ENCODE measurements at regions of chr2 and their contacts with region 1.

Region 1: GRCh38 chr2:196220671-196221070 is 49.3 kb upstream of the STK17B start:
- DNase-seq: peak in 16 of 35 experiments; percentile 2 to 69 (median 26)
- ATAC-seq: peak; percentile 74 to 98 (median 86)
- H3K4me3 ChIP-seq: no peak overlapping the region
- H3K4me3 Mint-ChIP-seq: peak overlapping the region in 1 of 3 donors; percentile 30
- H3K27ac ChIP-seq: no peak overlapping the region
- H3K27ac Mint-ChIP-seq: peak overlapping the region; percentile 65 to 86
- H3K4me1 ChIP-seq: peaks cover 8 to 13% of the 10 kb centered on the region in 2 experiments
- H3K4me1 Mint-ChIP-seq: peaks cover 77 to 82% (median 77%) of the 10 kb centered on the region in 3 donors
- H3K27me3 ChIP-seq: no peaks in the 10 kb centered on the region
- H3K27me3 Mint-ChIP-seq: no peaks in the 10 kb centered on the region

Region 2: DNA sequence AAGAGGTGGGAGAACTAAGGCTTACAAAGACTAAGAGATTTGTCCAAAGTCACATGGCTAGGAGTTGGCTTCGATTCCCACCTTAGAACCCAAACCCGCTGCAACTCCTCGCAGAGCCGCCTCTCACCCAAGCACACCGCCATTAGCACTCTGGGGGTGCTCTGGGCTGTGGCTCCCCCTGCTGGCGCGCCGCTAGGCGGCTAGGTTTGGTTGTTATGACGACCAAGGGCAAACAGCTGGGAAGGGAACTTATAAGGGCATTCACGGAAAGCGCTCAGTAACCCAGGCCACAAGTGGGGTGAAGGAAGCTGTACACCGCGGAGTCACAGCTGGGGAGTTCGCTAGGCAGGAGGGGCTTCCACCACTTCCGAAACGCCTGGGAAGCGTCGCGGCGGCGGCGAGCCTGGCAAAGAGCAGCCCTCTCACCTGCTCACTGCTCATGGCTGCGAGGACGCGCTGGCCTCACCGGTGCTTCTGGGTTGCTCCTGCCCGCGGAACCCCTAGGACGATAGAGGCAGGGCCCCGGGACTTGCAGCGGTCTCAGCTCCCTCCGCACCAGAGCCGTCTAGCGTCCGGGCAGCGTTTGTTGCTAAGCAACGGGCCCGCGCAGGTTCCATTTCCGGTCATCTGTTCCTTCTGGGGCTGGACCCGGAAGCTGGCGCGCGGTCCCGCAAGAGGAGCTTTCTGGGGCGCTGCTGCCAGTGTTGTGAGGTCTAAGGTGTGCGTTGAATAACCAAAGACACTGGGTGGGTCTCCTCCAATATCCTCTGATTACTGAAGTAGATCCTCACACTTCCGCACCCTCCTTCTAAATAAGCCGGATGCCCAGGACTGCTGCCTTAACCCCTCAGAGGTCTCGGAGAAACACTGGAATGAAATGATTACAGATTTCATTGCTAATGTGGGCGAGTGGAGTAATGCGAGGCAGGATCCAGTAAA is 152.1 kb before region 1 on chr2 and contains the start of gene DNAH7:
- CTCF ChIA-PET with region 1: interaction called in 1 of 2 experiments, 10 read pairs
- POLR2A ChIA-PET with region 1: no interaction called
- DNase-seq: peak; percentile 80 to 94 (median 92)
- ATAC-seq: peak; percentile 89 to 97 (median 93)
- H3K4me3 ChIP-seq: peak within 1 kb of the TSS; percentile 60 to 64
- H3K4me3 Mint-ChIP-seq: peak within 1 kb of the TSS; percentile 81 to 85 (median 82)
- H3K27ac ChIP-seq: peak within 1 kb of the TSS; percentile 51
- H3K27ac Mint-ChIP-seq: peak within 1 kb of the TSS; percentile 71 to 79
- H3K4me1 ChIP-seq: peaks cover 0 to 14% of the 10 kb centered on the region in 2 experiments
- H3K4me1 Mint-ChIP-seq: peaks cover 13 to 16% (median 14%) of the 10 kb centered on the region in 3 donors
- H3K27me3 ChIP-seq: peaks cover 0 to 4% of the 10 kb centered on the region in 2 experiments
- H3K27me3 Mint-ChIP-seq: peaks cover 0 to 4% of the 10 kb centered on the region in 2 donors
- total RNA-seq, gene DNAH7: 0.03 TPM in 1 of 5 donors, not detected in the others

Region 3: GRCh38 chr2:196076778-196077568 is 143.7 kb before region 1 on chr2:
- CTCF ChIA-PET with region 1: interaction called, 19 to 34 read pairs
- POLR2A ChIA-PET with region 1: no interaction called
- DNase-seq: no peak
- ATAC-seq: no peak
- H3K4me3 ChIP-seq: no peak overlapping the region
- H3K4me3 Mint-ChIP-seq: no peak overlapping the region
- H3K27ac ChIP-seq: no peak overlapping the region
- H3K27ac Mint-ChIP-seq: no peak overlapping the region
- H3K4me1 ChIP-seq: peaks cover 0 to 4% of the 10 kb centered on the region in 2 experiments
- H3K4me1 Mint-ChIP-seq: peaks cover 24 to 28% (median 27%) of the 10 kb centered on the region in 3 donors
- H3K27me3 ChIP-seq: no peaks in the 10 kb centered on the region
- H3K27me3 Mint-ChIP-seq: no peaks in the 10 kb centered on the region

Region 4: DNA sequence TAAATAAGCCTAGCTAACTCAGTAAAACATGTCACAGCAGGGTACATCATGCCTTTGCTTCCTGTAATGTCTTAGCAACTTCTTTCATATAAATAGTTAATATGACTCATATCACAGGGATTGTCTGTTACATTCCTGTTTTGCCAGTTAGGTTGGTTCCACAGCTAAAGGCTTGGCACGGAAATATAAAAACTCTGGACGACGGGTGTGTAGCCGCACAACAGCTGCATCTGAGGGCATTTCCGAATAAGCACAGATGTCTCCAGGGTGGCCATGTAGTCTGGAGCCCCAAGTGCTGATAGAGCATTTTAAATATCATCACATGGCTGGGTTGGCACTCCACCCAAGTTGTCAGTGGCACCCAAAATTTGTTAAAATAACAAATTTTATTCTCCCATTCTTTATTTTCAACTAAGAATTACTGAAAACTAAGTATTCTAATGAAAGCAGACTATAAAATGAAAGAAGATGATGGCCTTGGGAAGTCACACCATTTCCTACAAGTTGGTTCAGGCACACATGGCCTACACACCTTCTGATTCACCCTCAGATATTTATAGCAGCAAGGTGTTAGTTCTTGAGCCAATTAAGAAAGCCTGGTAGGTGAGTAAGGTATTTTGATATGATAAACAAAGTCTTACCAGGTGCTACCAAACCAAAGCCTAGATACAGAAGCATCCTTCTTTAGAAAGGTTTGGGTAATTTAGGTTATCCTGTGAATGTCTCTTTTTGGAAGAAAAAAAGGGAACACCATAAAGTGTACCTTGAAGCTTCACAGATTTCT is 12.5 kb after region 1 on chr2:
- CTCF ChIA-PET with region 1: interaction called, 4 to 14 read pairs
- POLR2A ChIA-PET with region 1: interaction called, 5 to 12 read pairs
- DNase-seq: no peak
- ATAC-seq: peak in 3 of 4 experiments; percentile 1 to 27 (median 18)
- H3K4me3 ChIP-seq: no peak overlapping the region
- H3K4me3 Mint-ChIP-seq: peak overlapping the region in 1 of 3 donors; percentile 49
- H3K27ac ChIP-seq: peak overlapping the region; percentile 69
- H3K27ac Mint-ChIP-seq: peak overlapping the region; percentile 91 to 97
- H3K4me1 ChIP-seq: peaks cover 60 to 61% of the 10 kb centered on the region in 2 experiments
- H3K4me1 Mint-ChIP-seq: peaks cover 92 to 93% (median 92%) of the 10 kb centered on the region in 3 donors
- H3K27me3 ChIP-seq: no peaks in the 10 kb centered on the region
- H3K27me3 Mint-ChIP-seq: no peaks in the 10 kb centered on the region

Region 5: DNA sequence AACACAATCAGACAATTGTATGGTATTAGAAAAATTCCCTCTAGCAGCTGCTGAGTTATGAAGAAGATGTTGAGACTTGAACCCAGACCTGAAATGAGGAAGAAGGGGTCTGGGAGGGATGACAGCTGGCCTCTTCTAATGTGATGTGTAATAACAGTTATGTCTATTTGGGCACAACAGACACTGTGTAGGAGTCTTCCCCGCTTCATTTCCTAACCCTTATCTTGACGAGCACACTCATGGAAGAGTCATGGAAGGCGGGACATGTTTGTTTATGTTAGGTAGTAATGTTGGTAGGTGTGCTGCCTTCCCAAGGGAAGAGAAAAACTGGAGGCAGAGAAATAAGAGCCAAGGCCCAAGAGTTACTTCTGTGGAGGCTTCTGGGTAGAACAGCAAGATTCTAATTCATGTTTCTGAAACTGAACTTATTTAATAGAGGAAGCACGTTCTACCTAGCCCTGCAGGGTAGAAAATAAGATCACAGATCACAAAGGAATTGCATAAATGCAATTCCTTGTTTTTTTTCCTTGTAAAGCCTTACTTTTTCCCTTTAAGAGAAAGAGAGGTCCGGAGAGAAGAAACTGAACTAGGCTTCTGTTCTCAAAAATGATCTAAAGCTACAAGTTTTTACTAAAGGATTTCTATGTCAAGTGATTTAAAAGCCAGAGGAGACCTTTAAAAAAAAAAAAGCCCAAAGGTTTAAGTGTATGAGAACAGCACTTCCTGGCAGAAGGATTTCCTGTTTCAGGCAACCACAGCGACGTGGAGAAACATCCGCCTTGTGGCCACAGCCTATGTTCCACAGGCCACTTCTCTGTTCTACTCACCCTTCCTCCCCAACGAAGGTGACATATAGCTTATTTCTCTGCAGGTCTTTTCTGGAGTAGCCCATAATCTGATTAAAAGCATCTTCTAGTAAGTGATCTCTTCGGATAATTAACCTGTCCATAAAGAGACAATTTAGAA is 19.2 kb after region 1 on chr2:
- CTCF ChIA-PET with region 1: interaction called, 4 to 14 read pairs
- POLR2A ChIA-PET with region 1: interaction called, 3 to 7 read pairs
- DNase-seq: peak; percentile 41 to 90 (median 80)
- ATAC-seq: peak; percentile 86 to 94 (median 90)
- H3K4me3 ChIP-seq: peak overlapping the region; percentile 8 to 16
- H3K4me3 Mint-ChIP-seq: peak overlapping the region; percentile 67 to 75 (median 73)
- H3K27ac ChIP-seq: peak overlapping the region; percentile 85
- H3K27ac Mint-ChIP-seq: peak overlapping the region; percentile 95 to 98
- H3K4me1 ChIP-seq: peaks cover 57 to 63% of the 10 kb centered on the region in 2 experiments
- H3K4me1 Mint-ChIP-seq: peaks cover 82 to 88% (median 87%) of the 10 kb centered on the region in 3 donors
- H3K27me3 ChIP-seq: no peaks in the 10 kb centered on the region
- H3K27me3 Mint-ChIP-seq: no peaks in the 10 kb centered on the region

Region 6: DNA sequence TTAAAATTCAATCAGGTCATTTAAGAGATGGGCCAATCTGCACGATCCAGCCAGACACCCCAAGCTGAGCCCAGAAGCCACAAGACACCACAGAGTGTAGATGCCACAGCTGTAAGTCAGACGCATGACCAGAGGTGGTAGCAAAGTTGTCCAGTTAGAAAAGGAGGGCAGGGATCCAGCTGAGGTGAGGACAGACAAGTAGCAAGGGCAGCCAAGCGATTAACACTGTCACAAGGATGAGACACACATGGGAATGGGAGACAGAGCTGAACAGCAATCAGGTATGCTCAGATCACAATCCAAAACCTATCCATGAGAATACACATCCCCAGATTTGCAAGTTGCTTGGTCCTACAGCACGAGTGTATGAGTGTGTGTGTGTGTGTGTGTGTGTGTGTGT is 94.1 kb after region 1 on chr2:
- CTCF ChIA-PET with region 1: no interaction called
- POLR2A ChIA-PET with region 1: no interaction called
- DNase-seq: no peak
- ATAC-seq: no peak
- H3K4me3 ChIP-seq: no peak overlapping the region
- H3K4me3 Mint-ChIP-seq: no peak overlapping the region
- H3K27ac ChIP-seq: no peak overlapping the region
- H3K27ac Mint-ChIP-seq: no peak overlapping the region
- H3K4me1 ChIP-seq: no peaks in the 10 kb centered on the region
- H3K4me1 Mint-ChIP-seq: no peaks in the 10 kb centered on the region
- H3K27me3 ChIP-seq: no peaks in the 10 kb centered on the region
- H3K27me3 Mint-ChIP-seq: no peaks in the 10 kb centered on the region